ENCODE measurements at regions of chr15 and their contacts with region 1.

Region 1: DNA sequence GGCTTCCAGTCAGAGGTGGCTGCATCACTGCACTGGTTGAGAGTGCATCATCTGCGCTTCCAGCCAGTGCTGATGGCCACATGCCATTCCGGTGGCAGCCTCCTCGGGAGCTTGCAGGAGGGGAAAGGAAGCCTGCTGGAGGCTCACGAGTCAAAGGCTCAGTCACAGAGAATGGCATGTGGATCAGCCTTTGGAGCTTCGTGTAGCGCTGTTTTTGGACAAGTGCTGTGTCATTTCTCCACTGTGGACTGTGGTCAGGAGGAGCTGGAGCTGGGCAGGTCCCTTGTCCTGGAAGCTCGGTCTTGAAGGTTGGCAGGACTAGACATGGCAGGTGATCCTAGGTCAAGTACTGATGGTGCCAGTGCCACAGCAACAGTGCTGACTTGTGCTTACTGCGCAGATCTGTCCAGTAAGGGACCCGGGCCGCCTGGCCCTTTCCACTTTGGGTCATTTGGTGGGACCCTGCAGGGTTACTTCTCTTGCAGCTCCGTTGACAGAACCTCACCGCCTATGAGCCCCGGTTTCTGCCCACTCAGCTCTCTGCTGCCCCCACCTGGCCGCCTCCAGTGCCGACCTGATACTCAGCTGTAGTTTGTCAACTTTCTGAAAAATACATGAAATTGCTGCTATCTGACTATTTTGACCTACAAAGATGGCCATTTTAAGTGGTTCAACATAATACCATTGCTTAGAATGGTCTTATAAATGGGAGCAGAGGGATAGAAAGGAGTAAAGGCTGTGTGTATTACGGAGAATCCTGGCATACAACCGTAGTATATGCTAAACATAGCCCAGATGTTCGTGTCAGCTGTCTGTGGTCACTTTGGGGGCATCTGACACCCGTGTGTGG is 27.6 kb upstream of the TRPM1 start:
- DNase-seq: peak; percentile 57
- ATAC-seq: peak; percentile 96
- H3K4me3 ChIP-seq: no peak overlapping the region
- H3K27ac ChIP-seq: no peak overlapping the region
- H3K4me1 ChIP-seq: peaks cover 4% of the 10 kb centered on the region
- H3K27me3 ChIP-seq: peaks cover 16% of the 10 kb centered on the region
- CTCF ChIP-seq: peak; percentile 93
- POLR2A ChIP-seq: no peak
- RAD21 ChIP-seq: peak; percentile 92

Region 2: DNA sequence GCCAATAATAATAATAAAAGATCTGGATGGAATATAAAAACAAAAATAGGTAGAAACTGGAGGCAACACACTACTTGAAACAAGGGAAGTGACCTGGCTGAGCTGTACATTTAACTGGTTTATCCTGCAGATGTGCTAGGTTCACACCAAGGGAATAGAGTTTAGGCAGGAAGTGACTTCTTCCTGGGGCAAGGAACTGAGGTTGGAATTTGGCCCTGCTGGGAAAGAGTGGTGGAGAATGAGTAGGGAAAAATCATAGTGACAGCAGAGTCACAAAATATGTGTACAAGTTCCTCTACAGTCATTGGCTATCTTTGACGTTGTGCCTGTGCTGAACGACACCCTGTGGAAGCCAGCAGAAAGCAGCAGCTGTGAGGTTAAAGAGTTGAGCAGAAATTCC is 459.1 kb before region 1 on chr15:
- CTCF ChIA-PET with region 1: no interaction called
- POLR2A ChIA-PET with region 1: no interaction called
- dilution Hi-C with region 1: no loop called
- in situ Hi-C with region 1: loop called (anchors 10 kb)
- intact Hi-C with region 1: loop called (anchors 2 kb)
- DNase-seq: peak; percentile 17
- ATAC-seq: peak; percentile 84
- H3K4me3 ChIP-seq: no peak overlapping the region
- H3K27ac ChIP-seq: no peak overlapping the region
- H3K4me1 ChIP-seq: peaks cover 3% of the 10 kb centered on the region
- H3K27me3 ChIP-seq: no peaks in the 10 kb centered on the region
- CTCF ChIP-seq: no peak
- POLR2A ChIP-seq: no peak
- RAD21 ChIP-seq: no peak

Region 3: GRCh38 chr15:30903497-30904201 is 225.5 kb before region 1 on chr15 and contains the start of gene FAN1:
- CTCF ChIA-PET with region 1: interaction called, 5 read pairs
- POLR2A ChIA-PET with region 1: no interaction called
- dilution Hi-C with region 1: no loop called
- in situ Hi-C with region 1: loop called (anchors 10 kb)
- intact Hi-C with region 1: loop called (anchors 2 kb)
- DNase-seq: peak; percentile 84
- ATAC-seq: peak; percentile 99
- H3K4me3 ChIP-seq: peak within 1 kb of the TSS; percentile 69
- H3K27ac ChIP-seq: peak within 1 kb of the TSS; percentile 54
- H3K4me1 ChIP-seq: no peaks in the 10 kb centered on the region
- H3K27me3 ChIP-seq: no peaks in the 10 kb centered on the region
- CTCF ChIP-seq: no peak
- POLR2A ChIP-seq: no peak
- RAD21 ChIP-seq: no peak
- total RNA-seq, gene FAN1: 12.4 and 15.0 TPM in 2 replicates

Region 4: GRCh38 chr15:30953731-30954378 is 175.3 kb before region 1 on chr15:
- CTCF ChIA-PET with region 1: interaction called, 3 read pairs
- POLR2A ChIA-PET with region 1: no interaction called
- dilution Hi-C with region 1: no loop called
- in situ Hi-C with region 1: no loop called
- intact Hi-C with region 1: loop called (anchors 2 kb)
- DNase-seq: peak; percentile 96
- ATAC-seq: peak; percentile 95
- H3K4me3 ChIP-seq: no peak overlapping the region
- H3K27ac ChIP-seq: peak overlapping the region; percentile 86
- H3K4me1 ChIP-seq: peaks cover 9% of the 10 kb centered on the region
- H3K27me3 ChIP-seq: no peaks in the 10 kb centered on the region
- CTCF ChIP-seq: no peak
- POLR2A ChIP-seq: no peak
- RAD21 ChIP-seq: peak; percentile 27

Region 5: DNA sequence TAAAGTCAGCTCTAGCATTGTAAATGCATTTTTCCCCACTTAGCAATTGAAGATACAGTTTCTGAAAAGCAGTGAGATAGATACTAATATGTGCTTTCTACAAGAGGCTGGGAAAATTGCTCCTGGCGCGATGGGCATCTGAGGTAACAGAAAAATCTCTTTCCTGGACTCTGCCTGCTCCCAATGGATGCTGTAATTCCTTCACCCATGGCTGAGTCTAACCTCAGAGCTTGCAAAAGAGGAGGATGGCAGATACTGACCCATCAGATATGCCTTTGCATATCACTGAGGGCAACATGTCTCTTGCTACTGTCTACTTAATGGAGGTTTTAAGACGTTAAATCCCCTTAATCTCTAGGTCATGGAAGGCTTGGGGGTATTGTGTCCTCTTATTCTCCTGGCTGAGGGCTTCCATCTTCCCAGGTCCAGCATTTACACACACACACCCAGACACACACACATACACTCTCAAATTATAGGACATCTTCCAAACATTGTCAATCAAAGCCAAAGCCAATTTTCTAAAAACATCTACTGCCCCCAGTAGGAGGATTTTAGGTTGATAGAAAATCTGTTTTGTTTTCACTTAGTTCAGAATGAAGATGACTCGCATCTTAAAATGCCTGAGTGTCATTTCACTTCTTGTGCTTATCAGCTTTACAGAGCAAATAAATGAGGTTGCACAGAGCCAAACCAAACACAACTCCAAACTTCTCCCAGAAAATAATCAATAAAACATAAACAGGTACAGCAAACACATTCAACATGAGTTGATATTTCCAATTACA is 30.0 kb before region 1 on chr15:
- CTCF ChIA-PET with region 1: no interaction called
- POLR2A ChIA-PET with region 1: no interaction called
- dilution Hi-C with region 1: no loop called
- in situ Hi-C with region 1: no loop called
- intact Hi-C with region 1: no loop called
- DNase-seq: no peak
- ATAC-seq: no peak
- H3K4me3 ChIP-seq: no peak overlapping the region
- H3K27ac ChIP-seq: no peak overlapping the region
- H3K4me1 ChIP-seq: no peaks in the 10 kb centered on the region
- H3K27me3 ChIP-seq: peaks cover 24% of the 10 kb centered on the region
- CTCF ChIP-seq: no peak
- POLR2A ChIP-seq: no peak
- RAD21 ChIP-seq: no peak

Region 6: DNA sequence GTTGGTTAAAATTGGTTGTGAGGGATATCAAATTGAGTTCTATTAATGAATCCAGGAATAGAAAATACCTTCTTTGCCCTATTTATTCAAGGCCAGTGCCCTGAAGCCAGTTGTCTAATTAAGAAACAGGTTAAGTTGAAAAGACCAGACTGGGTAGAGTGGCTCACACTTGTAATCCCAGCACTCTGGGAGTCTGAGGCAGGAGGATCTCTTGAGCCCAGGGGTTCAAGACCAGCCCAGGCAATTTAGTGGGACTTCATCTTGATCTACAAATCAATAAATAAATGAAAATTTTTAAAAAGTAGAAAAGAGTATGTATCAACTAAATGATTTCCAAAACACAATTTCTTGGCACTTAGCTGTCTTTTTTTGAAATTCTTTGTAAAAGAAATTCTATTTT is 12.6 kb after region 1 on chr15:
- CTCF ChIA-PET with region 1: interaction called, 10 read pairs
- POLR2A ChIA-PET with region 1: no interaction called
- dilution Hi-C with region 1: no loop called
- in situ Hi-C with region 1: no loop called
- intact Hi-C with region 1: no loop called
- DNase-seq: no peak
- ATAC-seq: no peak
- H3K4me3 ChIP-seq: no peak overlapping the region
- H3K27ac ChIP-seq: no peak overlapping the region
- H3K4me1 ChIP-seq: no peaks in the 10 kb centered on the region
- H3K27me3 ChIP-seq: peaks cover 11% of the 10 kb centered on the region
- CTCF ChIP-seq: no peak
- POLR2A ChIP-seq: no peak
- RAD21 ChIP-seq: no peak

Region 7: GRCh38 chr15:31169558-31169957 is 40.4 kb after region 1 on chr15:
- CTCF ChIA-PET with region 1: no interaction called
- POLR2A ChIA-PET with region 1: no interaction called
- dilution Hi-C with region 1: no loop called
- in situ Hi-C with region 1: no loop called
- intact Hi-C with region 1: no loop called
- DNase-seq: no peak
- ATAC-seq: no peak
- H3K4me3 ChIP-seq: no peak overlapping the region
- H3K27ac ChIP-seq: no peak overlapping the region
- H3K4me1 ChIP-seq: no peaks in the 10 kb centered on the region
- H3K27me3 ChIP-seq: peaks cover 5% of the 10 kb centered on the region; the same call in 1 of the 2 replicates
- CTCF ChIP-seq: no peak
- POLR2A ChIP-seq: no peak
- RAD21 ChIP-seq: no peak

Region 8: DNA sequence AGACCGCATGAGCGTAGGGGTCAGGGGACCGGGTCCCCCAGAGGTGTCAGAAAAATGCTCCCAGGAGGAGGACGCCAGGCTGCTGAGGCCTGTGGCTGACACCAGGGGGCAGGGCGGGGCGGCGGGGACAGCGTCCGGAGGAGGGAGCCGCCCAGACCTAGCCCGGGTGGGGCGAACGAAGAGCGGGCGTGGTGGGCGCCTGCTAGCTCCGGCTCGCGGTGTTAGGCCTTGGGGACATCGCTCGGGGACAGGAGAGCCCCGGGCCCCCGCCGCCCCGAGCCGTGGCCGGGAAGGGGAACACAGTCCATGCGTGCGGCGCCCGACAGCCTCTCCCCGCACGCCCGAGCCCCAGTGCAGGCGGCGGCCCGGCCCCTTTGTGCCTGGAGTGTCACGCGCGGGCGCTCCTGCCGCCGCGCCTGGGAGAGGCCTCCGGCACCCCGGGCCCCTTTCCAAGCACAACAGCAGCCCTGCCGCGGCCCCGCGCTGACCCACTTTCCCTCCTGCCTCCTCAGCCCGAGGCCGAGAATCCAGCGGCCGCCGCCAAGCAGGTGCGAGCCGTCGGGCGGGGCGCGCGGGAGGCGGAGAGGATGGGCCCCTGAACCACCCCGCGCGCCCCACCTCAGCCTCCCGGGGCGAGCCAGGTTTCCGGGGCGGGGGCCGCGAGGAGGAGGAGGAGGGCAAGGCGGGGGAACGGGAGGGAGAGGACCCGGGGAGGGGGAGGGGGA is 86.5 kb after region 1 on chr15:
- CTCF ChIA-PET with region 1: no interaction called
- POLR2A ChIA-PET with region 1: no interaction called
- dilution Hi-C with region 1: no loop called
- in situ Hi-C with region 1: no loop called
- intact Hi-C with region 1: no loop called
- DNase-seq: no peak
- ATAC-seq: peak; percentile 94
- H3K4me3 ChIP-seq: peak overlapping the region; percentile 36
- H3K27ac ChIP-seq: no peak overlapping the region
- H3K4me1 ChIP-seq: peaks cover 1% of the 10 kb centered on the region; the same call in 1 of the 2 replicates
- H3K27me3 ChIP-seq: peaks cover 20% of the 10 kb centered on the region
- CTCF ChIP-seq: peak; percentile 66
- POLR2A ChIP-seq: no peak
- RAD21 ChIP-seq: peak; percentile 62

Measured in IMR-90 (cell line).